Sciatic nerve (tissue), 2 donors: ENCODE measurements at regions of chr1 and their contacts with region 1.

Region 1: DNA sequence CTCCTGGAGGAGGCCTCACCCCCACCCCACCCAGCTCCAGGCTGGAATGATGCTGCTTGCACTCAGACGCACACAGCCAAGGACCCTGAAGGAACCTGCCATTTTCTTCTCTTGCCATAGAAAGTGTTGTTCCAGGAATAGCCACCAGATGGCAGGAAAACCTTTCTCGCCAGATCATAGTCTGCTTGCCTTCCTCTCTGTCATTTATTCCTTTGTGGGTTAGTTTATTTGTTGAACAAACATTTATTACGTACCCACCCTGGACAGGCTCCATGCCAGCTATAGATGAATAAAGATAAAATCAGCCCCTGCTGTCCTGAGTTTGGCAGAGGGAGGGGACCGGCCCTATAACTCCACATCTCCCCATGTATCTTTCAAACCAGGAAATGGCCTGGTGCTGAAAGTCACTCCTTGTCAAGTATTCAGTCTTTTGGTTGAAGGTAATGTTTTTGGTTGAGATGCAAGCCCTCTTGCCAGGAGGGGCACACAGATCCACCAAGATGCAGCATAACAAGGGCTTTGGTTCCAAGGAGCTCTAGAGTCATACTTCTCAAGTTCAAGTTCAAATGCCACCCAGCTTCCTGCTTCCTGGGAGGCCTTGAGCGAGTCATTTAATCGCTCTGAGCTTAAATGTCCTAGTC is 7.0 kb upstream of the KCNC4 start:
- DNase-seq: no peak
- ATAC-seq: peak; percentile 71

Region 2: GRCh38 chr1:110106013-110106941 is 96.9 kb before region 1 on chr1:
- intact Hi-C with region 1: no loop called
- DNase-seq: peak; percentile 79
- ATAC-seq: peak; percentile 87

Region 3: DNA sequence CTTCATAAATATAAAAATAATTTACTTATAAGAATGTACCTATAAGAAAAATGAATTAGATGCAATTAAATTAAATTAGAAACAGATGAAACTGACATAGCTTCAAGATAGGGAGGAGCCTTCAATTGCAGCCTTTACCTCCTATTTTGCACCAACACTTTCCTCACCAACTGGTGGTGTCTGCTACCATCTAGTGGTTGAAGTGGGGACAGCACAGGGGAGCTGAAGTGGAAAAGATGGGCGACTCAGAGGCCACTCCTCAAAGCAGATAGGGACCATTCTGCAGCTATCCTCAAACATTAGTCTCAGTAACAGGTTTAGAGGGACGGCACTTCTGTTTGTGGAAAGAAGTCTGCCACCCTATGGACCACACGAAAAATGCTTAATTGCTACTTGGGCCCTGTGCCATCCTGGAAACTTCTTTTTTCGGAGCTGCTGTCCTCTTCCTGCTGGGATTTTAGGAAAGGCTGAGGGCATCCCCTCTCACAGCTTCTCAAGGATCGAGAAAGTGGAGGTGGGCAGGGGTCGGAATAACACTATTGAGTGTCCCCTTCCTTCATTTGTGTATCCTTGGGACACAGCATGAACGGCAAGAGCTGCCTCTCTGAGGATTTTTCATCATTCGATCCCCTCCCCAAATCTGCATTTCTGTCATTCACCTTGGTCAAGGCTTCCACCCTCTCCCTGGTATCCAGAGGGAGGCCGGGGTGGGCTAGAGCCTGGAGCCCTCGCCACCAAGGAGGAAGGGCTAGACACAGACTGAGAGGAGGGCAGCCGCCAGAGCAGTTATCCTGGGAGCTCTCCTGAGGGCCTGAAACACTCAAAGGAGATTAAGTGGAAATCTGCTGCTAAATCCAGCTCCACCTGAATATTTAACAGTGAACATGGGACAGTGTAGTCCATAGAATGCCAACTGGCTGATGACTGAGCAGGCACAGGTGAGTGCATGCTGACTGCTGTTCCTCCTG is 257.4 kb after region 1 on chr1:
- intact Hi-C with region 1: loop called (anchors 5 kb)
- DNase-seq: peak; percentile 89
- ATAC-seq: peak; percentile 87